Gastrocnemius medialis (tissue), 4 donors: ENCODE measurements at regions of chr11 and their contacts with region 1.

Region 1: DNA sequence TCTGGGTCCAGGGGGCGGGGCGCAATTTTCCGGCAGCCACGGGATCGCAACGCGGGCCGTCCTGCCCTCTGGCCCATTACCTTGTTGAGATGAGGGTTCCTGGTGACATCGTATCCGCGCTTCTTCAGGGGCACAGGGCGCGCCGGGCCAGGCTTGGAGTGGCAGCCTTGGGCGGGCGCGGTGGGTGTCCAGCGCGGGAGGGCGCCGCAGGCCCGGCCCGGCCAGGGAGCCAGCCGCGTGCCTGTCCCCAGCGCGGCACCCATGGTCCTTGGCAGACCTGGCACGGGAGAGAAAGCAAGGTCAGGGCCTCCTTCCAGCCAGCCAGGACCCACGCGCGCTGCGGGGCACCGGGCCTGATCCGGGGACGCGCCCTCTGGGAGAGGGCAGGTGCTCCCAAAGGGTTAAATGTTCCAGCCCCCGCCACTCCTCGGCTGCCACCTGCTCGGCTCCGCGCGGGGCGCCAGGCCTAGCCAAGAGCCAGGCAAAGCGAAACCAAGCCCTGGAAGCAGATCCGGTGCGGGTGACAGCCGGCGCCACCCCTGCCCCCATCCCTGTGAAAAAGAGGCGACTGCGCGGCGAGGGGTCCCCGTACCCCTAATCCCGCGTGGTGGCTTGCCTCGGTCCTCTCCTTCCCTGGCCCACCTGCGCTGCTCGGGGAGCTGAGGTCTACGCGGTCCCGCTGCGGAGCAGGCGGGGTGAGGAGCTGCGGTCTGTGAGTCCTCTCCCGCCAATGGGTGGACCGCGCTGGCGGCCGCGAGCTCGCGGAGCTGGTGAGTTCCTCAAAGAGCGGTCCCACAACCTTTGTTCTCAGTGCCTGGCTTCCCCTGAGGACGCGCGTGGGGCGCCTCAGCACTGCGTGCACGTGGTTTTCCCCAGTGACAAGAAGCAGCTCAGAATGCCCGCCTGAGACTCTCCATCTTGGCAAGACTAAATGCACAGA is at the start of gene ME3:
- DNase-seq: peak; percentile 53 to 75
- ATAC-seq: peak; percentile 79 to 80
- H3K4me3 ChIP-seq: peak within 1 kb of the TSS; percentile 64 to 95 (median 90)
- H3K27ac ChIP-seq: peak within 1 kb of the TSS; percentile 88 to 98 (median 96)
- H3K4me1 ChIP-seq: peaks cover 26 to 54% of the 10 kb centered on the region in 2 donors
- H3K27me3 ChIP-seq: no peaks in the 10 kb centered on the region
- CTCF ChIP-seq: peak in 1 of 5 experiments; percentile 22
- POLR2A ChIP-seq: peak; percentile 41 to 54
- total RNA-seq, gene ME3: 4.2 to 17.0 (median 15.7) TPM

Region 2: DNA sequence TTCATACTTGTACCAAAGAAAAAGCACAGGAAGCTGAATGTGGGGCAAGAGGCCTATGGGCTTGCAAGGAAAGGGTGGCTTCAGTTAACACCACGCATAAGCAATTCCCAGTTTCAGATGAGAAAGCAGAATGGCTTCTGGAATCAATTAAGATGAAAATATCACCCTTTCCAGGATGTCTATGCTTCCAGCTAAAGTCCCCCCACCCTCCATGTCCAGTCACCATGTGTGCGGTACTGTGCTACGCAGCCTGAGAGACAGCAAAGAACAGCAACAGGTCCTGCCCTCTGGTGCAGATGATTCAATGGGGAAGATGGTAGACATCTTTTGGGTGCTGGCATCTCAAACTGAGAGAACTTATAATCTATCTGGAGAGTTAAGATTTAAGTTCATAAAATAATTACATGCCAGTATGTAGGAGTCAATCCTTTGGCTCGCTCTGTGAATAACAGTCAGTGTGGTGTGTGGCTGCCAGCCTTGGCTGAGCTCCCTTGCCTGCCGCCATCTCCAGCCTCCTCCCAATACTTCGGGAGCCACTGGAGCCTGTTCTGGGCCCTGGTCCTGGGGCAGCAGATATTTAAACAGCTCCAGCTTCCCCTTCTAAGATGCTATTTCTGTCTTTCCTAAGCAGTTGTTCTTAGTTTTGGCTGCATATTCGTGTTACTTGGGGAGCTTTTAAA is 44.0 kb before region 1 on chr11:
- in situ Hi-C with region 1: no loop called
- intact Hi-C with region 1: loop called (anchors 5 kb)
- DNase-seq: no peak
- ATAC-seq: no peak
- H3K4me3 ChIP-seq: no peak overlapping the region
- H3K27ac ChIP-seq: peak overlapping the region; percentile 50 to 68 (median 63)
- H3K4me1 ChIP-seq: peaks cover 54 to 55% of the 10 kb centered on the region in 2 donors
- H3K27me3 ChIP-seq: no peaks in the 10 kb centered on the region
- CTCF ChIP-seq: no peak
- POLR2A ChIP-seq: no peak

Region 3: DNA sequence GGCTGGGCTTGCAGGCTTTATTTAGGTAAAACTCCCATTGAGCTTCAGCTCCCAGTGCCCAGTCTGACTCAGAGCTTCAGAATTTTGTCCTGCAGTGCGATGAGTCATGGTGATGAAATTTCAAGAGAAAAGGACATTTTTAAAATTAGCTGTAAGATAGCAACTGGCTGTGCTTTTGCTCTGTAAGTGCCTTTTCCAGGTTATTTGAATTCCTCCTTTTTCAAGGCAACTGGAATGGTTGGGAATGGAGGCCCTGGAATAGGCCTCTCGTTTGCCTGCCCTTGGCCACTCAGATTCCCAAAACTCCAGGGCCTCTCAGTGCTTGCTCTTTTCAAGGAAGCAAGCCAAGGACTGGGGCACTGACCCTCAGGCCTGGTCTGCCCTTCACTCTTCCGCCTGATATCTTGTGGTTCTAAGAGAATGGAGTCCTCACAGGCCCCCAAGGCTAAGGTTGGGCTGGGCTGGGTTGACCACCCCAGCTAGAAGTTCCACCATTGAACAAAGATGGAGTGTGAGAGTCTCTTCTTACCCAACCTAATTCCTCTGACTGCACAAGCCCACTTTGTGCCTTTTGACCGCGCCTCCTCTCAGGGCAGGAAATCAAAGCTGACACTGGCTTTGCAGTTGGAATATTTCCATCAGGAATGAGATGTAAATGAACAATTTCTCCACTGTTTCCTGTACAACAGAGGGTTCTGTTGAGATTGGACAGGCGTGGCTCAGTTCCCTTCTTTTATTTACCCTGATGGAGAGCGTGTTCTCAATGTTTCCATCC is 68.9 kb after region 1 on chr11:
- in situ Hi-C with region 1: no loop called
- intact Hi-C with region 1: loop called (anchors 5 kb)
- DNase-seq: peak; percentile 24 to 54
- ATAC-seq: peak; percentile 51 to 59
- H3K4me3 ChIP-seq: no peak overlapping the region
- H3K27ac ChIP-seq: peak overlapping the region; percentile 64 to 75 (median 70)
- H3K4me1 ChIP-seq: peaks cover 18 to 30% of the 10 kb centered on the region in 2 donors
- H3K27me3 ChIP-seq: no peaks in the 10 kb centered on the region
- CTCF ChIP-seq: no peak
- POLR2A ChIP-seq: no peak

Region 4: GRCh38 chr11:86802601-86803051 is 130.7 kb after region 1 on chr11:
- in situ Hi-C with region 1: loop called in 2 of 4 experiments (anchors 10 kb)
- intact Hi-C with region 1: loop called (anchors 1 kb)
- DNase-seq: no peak
- ATAC-seq: peak in 1 of 2 donors; percentile 37
- H3K4me3 ChIP-seq: no peak overlapping the region
- H3K27ac ChIP-seq: peak overlapping the region in 1 of 4 donors; percentile 9
- H3K4me1 ChIP-seq: peaks cover 5 to 39% of the 10 kb centered on the region in 2 donors
- H3K27me3 ChIP-seq: no peaks in the 10 kb centered on the region
- CTCF ChIP-seq: peak in 4 of 5 experiments; percentile 46 to 51 (median 48)
- POLR2A ChIP-seq: no peak